Body of pancreas (tissue), 4 donors: ENCODE measurements at regions of chr19 and their contacts with region 1.

Region 1: GRCh38 chr19:35029737-35030256 is 473 bp upstream of the SCN1B start:
- DNase-seq: no peak
- ATAC-seq: no peak
- H3K4me3 ChIP-seq: no peak overlapping the region
- H3K27ac ChIP-seq: no peak overlapping the region
- H3K4me1 ChIP-seq: peaks cover 28% of the 10 kb centered on the region
- H3K27me3 ChIP-seq: peaks cover 0 to 3% of the 10 kb centered on the region in 2 donors
- CTCF ChIP-seq: no peak
- POLR2A ChIP-seq: peak in 1 of 3 donors; percentile 11

Region 2: DNA sequence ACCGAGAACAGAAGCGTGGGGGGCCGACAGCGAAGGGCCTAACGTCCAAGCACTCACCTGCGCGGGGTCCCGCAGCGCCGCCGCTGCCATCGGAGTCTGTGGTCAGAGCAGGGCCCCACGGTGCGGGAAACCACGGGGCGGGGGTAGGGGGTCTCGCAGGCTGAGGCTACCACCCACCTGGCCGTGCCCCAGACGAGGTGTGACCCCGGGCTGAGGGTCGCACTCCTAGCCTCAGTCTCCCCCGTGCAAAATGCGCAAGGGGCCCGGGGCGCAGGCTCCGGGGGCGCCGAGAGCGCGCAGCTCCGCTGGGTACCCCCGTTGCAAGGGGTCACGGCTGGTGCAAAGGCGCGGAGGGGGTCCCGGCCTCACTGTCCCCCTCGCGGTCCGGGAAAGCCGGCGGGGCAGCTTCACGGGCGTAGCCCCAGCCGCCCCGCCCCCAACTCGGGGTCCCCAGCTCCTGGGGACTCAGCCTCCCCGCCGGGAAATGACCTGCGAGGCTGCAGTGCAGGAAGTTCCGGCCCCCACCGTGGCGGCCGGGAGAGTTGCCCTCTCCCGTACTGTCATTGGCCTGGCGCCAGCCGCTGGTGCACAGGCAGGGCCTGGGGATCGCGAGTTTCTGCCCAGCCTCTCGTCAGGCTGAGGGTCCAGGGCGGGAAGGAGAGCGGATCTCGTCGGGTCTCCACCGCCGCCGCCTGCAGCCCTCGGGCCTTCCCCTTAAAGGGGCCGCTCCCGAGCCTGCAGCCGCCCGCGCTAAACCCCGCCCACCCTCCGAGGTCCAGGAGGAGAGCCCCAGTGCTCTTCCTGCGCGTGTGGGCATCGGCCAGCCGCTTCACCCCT is 66.0 kb before region 1 on chr19 and contains the start of gene ZNF792:
- intact Hi-C with region 1: loop called (anchors 5 kb)
- DNase-seq: peak; percentile 60 to 73 (median 66)
- ATAC-seq: peak; percentile 73
- H3K4me3 ChIP-seq: peak within 1 kb of the TSS; percentile 88 to 91
- H3K27ac ChIP-seq: peak within 1 kb of the TSS in 3 of 4 donors; percentile 51 to 57 (median 52)
- H3K4me1 ChIP-seq: peaks cover 24% of the 10 kb centered on the region
- H3K27me3 ChIP-seq: no peaks in the 10 kb centered on the region
- CTCF ChIP-seq: no peak
- POLR2A ChIP-seq: peak in 2 of 3 donors; percentile 29 to 52
- total RNA-seq, gene ZNF792: 4.0 to 7.0 TPM